ENCODE measurements at regions of chr10 and their contacts with region 1.

Region 1: GRCh38 chr10:80382989-80383388 is 25.4 kb upstream of the PRXL2A start:
- DNase-seq: peak; percentile 15
- ATAC-seq: peak; percentile 67; the same call in 1 of the 2 replicates
- H3K4me3 ChIP-seq: no peak overlapping the region
- H3K27ac ChIP-seq: no peak overlapping the region
- H3K4me1 ChIP-seq: no peaks in the 10 kb centered on the region
- H3K27me3 ChIP-seq: peaks cover 13% of the 10 kb centered on the region; the same call in 1 of the 2 replicates
- CTCF ChIP-seq: peak; percentile 83

Region 2: GRCh38 chr10:80078448-80079311 is 304.3 kb before region 1 on chr10 and contains the start of gene TMEM254:
- CTCF ChIA-PET with region 1: no interaction called
- POLR2A ChIA-PET with region 1: interaction called, 11 read pairs
- in situ Hi-C with region 1: no loop called
- intact Hi-C with region 1: no loop called
- DNase-seq: peak; percentile 74
- ATAC-seq: peak; percentile 97
- H3K4me3 ChIP-seq: peak within 1 kb of the TSS; percentile 93 to 95
- H3K27ac ChIP-seq: peak within 1 kb of the TSS; percentile 97
- H3K4me1 ChIP-seq: no peaks in the 10 kb centered on the region; the same call in 1 of the 2 replicates
- H3K27me3 ChIP-seq: no peaks in the 10 kb centered on the region
- CTCF ChIP-seq: no peak
- total RNA-seq, gene TMEM254: 28.8 TPM

Region 3: DNA sequence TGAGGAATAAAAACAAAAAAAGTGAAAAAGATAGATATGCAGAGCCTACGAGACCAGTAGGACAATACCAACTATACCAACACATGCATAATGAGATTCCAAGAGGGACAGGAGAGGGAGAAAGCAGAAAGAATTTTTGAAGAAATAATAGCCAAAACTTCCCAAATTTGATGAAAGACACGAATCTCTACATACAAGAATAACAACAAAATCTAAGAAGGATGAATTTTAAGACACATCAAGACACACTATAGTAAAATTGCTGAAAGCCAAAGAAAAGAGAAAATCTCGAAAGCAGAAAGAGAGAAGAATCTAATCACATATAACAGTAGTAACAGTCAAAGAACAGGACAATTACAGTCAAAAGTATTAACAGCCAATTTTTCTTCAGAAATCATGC is 86.0 kb before region 1 on chr10:
- CTCF ChIA-PET with region 1: no interaction called
- POLR2A ChIA-PET with region 1: no interaction called
- in situ Hi-C with region 1: no loop called
- intact Hi-C with region 1: no loop called
- DNase-seq: no peak
- ATAC-seq: no peak
- H3K4me3 ChIP-seq: no peak overlapping the region
- H3K27ac ChIP-seq: no peak overlapping the region
- H3K4me1 ChIP-seq: no peaks in the 10 kb centered on the region
- H3K27me3 ChIP-seq: peaks cover 5% of the 10 kb centered on the region; the same call in 1 of the 2 replicates
- CTCF ChIP-seq: no peak

Region 4: DNA sequence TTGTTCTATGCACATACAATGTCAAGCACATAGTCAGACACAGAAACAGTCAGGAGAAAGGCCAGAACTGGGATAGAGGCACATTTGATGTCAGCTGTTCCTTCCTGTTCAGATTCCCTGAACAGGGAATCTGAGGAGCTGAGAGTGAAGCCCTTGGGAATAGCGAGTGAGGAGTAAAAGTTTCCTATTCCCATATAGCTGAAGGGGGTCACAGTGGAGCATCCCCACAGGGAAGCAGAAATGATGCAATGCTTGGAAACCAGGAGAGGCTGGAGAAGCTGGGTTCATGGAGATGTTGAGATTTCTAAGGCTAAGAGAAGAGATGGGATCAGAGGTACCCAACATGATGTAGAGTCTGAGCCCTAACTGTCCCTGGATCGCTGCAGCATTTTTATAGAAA is 14.0 kb after region 1 on chr10:
- CTCF ChIA-PET with region 1: interaction called, 5 read pairs
- POLR2A ChIA-PET with region 1: interaction called, 13 read pairs
- in situ Hi-C with region 1: no loop called
- intact Hi-C with region 1: no loop called
- DNase-seq: no peak
- ATAC-seq: no peak
- H3K4me3 ChIP-seq: no peak overlapping the region
- H3K27ac ChIP-seq: no peak overlapping the region
- H3K4me1 ChIP-seq: no peaks in the 10 kb centered on the region
- H3K27me3 ChIP-seq: no peaks in the 10 kb centered on the region
- CTCF ChIP-seq: no peak

Region 5: DNA sequence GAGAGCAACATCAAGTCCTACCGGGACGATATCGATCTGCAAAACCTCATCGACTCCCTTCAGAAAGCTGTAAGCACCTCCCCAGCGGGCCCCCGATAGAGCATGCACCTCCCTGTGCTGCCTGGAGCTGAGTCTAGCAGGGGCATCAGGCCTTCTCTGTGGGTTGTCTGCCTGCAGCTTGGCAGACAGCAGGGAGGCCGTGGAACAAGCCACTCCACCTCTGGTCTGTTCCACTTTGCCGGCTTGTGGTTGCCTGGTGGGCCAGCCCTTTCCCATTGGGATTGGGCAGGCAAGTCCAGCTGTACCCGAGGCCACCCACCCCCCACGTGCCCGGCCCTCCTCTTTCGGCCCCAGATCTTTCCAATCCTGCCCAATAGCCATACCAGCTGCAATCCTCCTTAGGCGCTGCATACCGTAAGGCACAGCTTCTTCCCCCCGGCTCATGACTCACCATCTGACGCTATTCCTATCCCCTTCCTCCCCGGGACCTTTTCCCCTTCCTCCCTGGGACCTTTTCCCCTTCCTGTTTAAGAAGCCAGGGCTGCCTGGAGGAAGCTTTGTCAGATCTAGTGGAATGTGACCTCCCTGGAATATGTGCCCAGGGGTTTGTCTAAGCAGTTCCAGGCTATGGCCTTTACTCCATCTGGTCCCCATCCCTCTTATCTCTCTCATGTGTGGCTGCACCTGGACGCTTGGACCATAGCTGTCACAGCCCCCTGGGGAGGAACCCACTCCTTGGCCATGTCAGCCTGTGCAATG is 126.6 kb after region 1 on chr10:
- CTCF ChIA-PET with region 1: interaction called, 5 read pairs
- POLR2A ChIA-PET with region 1: no interaction called
- in situ Hi-C with region 1: no loop called
- intact Hi-C with region 1: loop called (anchors 5 kb)
- DNase-seq: no peak
- ATAC-seq: no peak
- H3K4me3 ChIP-seq: no peak overlapping the region
- H3K27ac ChIP-seq: no peak overlapping the region
- H3K4me1 ChIP-seq: no peaks in the 10 kb centered on the region
- H3K27me3 ChIP-seq: no peaks in the 10 kb centered on the region
- CTCF ChIP-seq: no peak

Region 6: DNA sequence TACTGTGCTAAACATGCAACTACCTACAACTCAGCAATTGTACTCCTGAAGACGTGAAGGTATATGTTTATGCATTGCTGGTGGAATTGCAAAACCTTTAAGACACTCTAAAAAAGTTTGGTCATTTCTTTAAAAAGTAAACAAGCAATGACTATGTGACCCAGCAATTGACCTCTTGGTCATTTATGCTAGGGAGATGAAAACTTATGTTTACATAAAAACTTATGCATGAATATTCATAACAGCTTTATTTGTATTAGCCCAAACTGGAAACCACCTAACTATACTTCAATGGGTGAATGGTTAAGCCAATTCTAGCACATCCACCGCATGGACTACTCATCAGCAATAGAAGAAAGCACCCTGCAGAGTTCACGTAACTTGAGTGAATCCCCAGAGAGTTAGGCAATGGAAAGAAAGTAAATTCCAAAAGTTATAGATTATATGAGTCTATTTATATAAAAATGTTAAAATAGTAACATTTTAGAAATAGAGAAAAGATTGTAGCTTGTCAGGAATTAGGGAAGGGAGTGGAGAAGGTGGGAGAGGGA is 1431.8 kb after region 1 on chr10:
- CTCF ChIA-PET with region 1: no interaction called
- POLR2A ChIA-PET with region 1: no interaction called
- in situ Hi-C with region 1: no loop called
- intact Hi-C with region 1: no loop called
- DNase-seq: no peak
- ATAC-seq: no peak
- H3K4me3 ChIP-seq: no peak overlapping the region
- H3K27ac ChIP-seq: no peak overlapping the region
- H3K4me1 ChIP-seq: no peaks in the 10 kb centered on the region
- H3K27me3 ChIP-seq: no peaks in the 10 kb centered on the region
- CTCF ChIP-seq: no peak